HepG2 (cell line): ENCODE measurements at regions of chr16 and their contacts with region 1.

Region 1: GRCh38 chr16:610513-611334 is 20.1 kb upstream of the WFIKKN1 start:
- DNase-seq: peak; percentile 73
- ATAC-seq: peak; percentile 90
- H3K4me3 ChIP-seq: peak overlapping the region; percentile 21 to 47 (median 42); a peak in 4 of 6 replicates
- H3K27ac ChIP-seq: peak overlapping the region; percentile 49
- H3K4me1 ChIP-seq: peaks cover 17% of the 10 kb centered on the region
- H3K27me3 ChIP-seq: no peaks in the 10 kb centered on the region
- CTCF ChIP-seq: peak; percentile 92
- EP300 ChIP-seq: no peak
- POLR2A ChIP-seq: no peak
- RAD21 ChIP-seq: peak; percentile 91

Region 2: DNA sequence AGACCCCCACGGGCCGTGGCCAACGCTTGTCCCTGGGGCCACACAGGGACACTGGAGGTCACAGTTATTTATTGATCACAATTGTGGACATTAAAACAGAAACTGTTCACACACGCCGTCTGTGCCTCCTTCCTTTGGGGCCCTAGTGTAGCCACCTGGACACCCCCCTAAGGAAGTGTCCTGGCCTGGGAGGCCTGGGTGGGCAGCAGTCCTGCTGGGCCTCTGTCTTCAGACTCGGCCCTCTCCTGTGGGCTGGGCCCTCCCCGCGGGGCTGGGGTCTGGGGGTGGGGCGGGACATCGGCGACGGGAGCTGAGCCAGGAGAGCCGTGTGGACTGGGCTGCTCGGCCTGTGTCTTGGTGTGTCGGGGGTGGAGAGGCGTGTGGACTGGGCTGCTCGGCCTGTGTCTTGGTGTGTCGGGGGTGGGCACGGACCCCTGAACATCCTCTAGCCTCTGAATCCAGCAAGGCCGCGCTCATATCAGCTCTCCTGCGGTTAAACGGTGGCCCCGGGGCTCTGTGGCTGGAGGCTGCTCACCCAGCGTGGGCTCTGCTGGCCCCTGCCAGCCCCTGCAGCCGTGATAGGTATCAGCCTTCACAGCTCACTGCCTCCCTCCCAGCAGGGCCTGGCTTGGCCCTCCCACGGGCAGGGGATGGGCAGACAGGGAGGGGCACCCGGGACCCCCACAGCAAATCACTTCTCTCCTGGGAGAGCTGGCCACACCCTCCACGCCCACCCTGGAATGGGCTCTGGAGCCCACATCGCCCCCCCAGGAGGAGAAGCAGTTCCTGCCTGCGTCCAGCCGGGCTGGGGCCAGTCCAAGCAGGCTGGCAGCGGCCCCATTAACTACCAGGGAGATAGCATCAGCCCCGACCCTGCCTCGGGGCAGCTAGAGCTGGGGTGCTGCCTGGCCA is 45.0 kb before region 1 on chr16:
- CTCF ChIA-PET with region 1: no interaction called
- POLR2A ChIA-PET with region 1: no interaction called
- in situ Hi-C with region 1: no loop called
- intact Hi-C with region 1: no loop called
- DNase-seq: no peak
- ATAC-seq: peak; percentile 5; the same call in 1 of the 3 replicates
- H3K4me3 ChIP-seq: peak overlapping the region; percentile 55 to 92 (median 65)
- H3K27ac ChIP-seq: no peak overlapping the region
- H3K4me1 ChIP-seq: peaks cover 69% of the 10 kb centered on the region
- H3K27me3 ChIP-seq: peaks cover 16 to 52% of the 10 kb centered on the region in 2 experiments
- CTCF ChIP-seq: no peak
- EP300 ChIP-seq: no peak
- POLR2A ChIP-seq: no peak
- RAD21 ChIP-seq: no peak

Region 3: GRCh38 chr16:578870-579405 is 31.8 kb before region 1 on chr16:
- CTCF ChIA-PET with region 1: interaction called, 11 read pairs
- POLR2A ChIA-PET with region 1: no interaction called
- in situ Hi-C with region 1: no loop called
- intact Hi-C with region 1: no loop called
- DNase-seq: peak; percentile 60
- ATAC-seq: peak; percentile 81
- H3K4me3 ChIP-seq: peak overlapping the region in 1 of 3 experiments; percentile 24; a peak in 1 of 6 replicates
- H3K27ac ChIP-seq: no peak overlapping the region
- H3K4me1 ChIP-seq: peaks cover 12% of the 10 kb centered on the region
- H3K27me3 ChIP-seq: no peaks in the 10 kb centered on the region
- CTCF ChIP-seq: peak; percentile 98
- EP300 ChIP-seq: no peak
- POLR2A ChIP-seq: no peak
- RAD21 ChIP-seq: peak; percentile 96

Region 4: GRCh38 chr16:589658-590159 is 21.0 kb before region 1 on chr16 and contains the start of gene RAB40C:
- CTCF ChIA-PET with region 1: no interaction called
- POLR2A ChIA-PET with region 1: no interaction called
- in situ Hi-C with region 1: no loop called
- intact Hi-C with region 1: no loop called
- DNase-seq: peak; percentile 93
- ATAC-seq: peak; percentile 79
- H3K4me3 ChIP-seq: peak within 1 kb of the TSS; percentile 94 to 96 (median 96)
- H3K27ac ChIP-seq: peak within 1 kb of the TSS; percentile 99
- H3K4me1 ChIP-seq: peaks cover 68% of the 10 kb centered on the region
- H3K27me3 ChIP-seq: no peaks in the 10 kb centered on the region
- CTCF ChIP-seq: peak; percentile 50
- EP300 ChIP-seq: no peak
- POLR2A ChIP-seq: peak in 1 of 2 experiments; percentile 57; a peak in 2 of 4 replicates
- RAD21 ChIP-seq: no peak
- total RNA-seq, gene RAB40C: 8.2 and 11.5 TPM in 2 replicates

Region 5: DNA sequence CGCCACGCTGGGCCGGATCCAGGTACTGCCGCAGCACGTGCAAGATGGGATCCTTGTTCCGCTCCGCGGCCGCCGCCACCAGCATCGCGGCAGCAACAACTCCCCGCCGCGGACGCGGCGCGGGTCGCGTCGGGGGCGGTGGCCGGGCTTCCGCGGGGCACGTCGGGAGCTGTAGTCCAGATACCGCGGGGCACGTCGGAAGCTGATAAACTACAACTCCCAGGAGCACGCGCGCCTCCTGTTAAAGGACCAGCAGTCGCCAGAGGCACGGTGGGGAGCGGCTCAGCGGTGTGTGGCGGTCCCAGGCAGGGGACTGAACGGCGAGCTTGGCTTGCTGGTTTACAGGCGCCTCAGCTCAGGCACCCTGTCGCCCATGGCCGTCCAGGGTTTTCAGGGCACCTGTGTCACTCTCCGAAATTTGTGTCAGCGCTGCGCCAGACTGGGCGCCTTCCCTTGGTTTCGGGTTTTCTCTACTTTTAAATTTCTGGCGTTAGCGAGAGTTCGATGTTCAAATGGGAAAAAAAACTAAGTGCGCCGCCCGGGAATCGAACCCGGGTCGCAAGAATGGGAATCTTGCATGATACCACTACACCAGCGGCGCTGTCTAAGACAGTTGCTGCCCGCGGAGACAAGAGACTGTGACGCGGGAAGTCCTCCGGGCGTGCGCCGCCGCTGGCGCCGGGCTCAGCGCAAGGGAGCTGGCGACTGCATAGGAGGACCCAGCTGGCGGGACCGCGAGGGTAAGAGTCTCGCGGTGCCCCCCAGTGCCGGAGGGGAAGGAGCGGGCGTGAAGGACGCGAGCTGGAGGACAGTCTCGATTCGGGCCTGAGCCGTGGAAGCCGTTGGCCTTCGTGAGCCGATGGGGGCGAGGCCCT is 25.7 kb after region 1 on chr16 and contains the start of gene METTL26:
- CTCF ChIA-PET with region 1: no interaction called
- POLR2A ChIA-PET with region 1: no interaction called
- in situ Hi-C with region 1: no loop called
- intact Hi-C with region 1: no loop called
- DNase-seq: peak; percentile 92
- ATAC-seq: peak; percentile 80
- H3K4me3 ChIP-seq: peak within 1 kb of the TSS; percentile 90 to 94 (median 92)
- H3K27ac ChIP-seq: peak within 1 kb of the TSS; percentile 88
- H3K4me1 ChIP-seq: peaks cover 37% of the 10 kb centered on the region
- H3K27me3 ChIP-seq: no peaks in the 10 kb centered on the region
- CTCF ChIP-seq: peak; percentile 29; the same call in 1 of the 2 replicates
- EP300 ChIP-seq: no peak
- POLR2A ChIP-seq: peak; percentile 72 to 95
- RAD21 ChIP-seq: peak; percentile 69
- total RNA-seq, gene METTL26: 70.1 and 75.1 TPM in 2 replicates

Region 6: GRCh38 chr16:711548-712320 is 101.0 kb after region 1 on chr16:
- CTCF ChIA-PET with region 1: no interaction called
- POLR2A ChIA-PET with region 1: no interaction called
- in situ Hi-C with region 1: no loop called
- intact Hi-C with region 1: no loop called
- DNase-seq: no peak
- ATAC-seq: peak; percentile 65
- H3K4me3 ChIP-seq: no peak overlapping the region
- H3K27ac ChIP-seq: no peak overlapping the region
- H3K4me1 ChIP-seq: peaks cover 32% of the 10 kb centered on the region
- H3K27me3 ChIP-seq: peaks cover 5 to 43% of the 10 kb centered on the region in 2 experiments; a peak in 4 of 5 replicates
- CTCF ChIP-seq: peak; percentile 95
- EP300 ChIP-seq: no peak
- POLR2A ChIP-seq: no peak
- RAD21 ChIP-seq: peak; percentile 97